Activated CD8-positive, alpha-beta T cell treated with anti-CD3 and anti-CD28 coated beads, Interleukin-2, amount 10 ng/mL, durations not matched to agents 7 days and 5 days (primary cell): ENCODE measurements at regions of chr5 and their contacts with region 1.

Region 1: GRCh38 chr5:131589510-131590348 is 45.3 kb downstream of the RAPGEF6 start:
- DNase-seq: peak; percentile 49
- ATAC-seq: peak; percentile 67
- H3K4me3 Mint-ChIP-seq: no peak overlapping the region
- H3K27ac Mint-ChIP-seq: no peak overlapping the region
- H3K4me1 Mint-ChIP-seq: peaks cover 33% of the 10 kb centered on the region
- H3K27me3 Mint-ChIP-seq: no peaks in the 10 kb centered on the region

Region 2: GRCh38 chr5:131198625-131199024 is 391.1 kb before region 1 on chr5:
- CTCF ChIA-PET with region 1: no interaction called
- POLR2A ChIA-PET with region 1: no interaction called
- DNase-seq: no peak
- ATAC-seq: no peak
- H3K4me3 Mint-ChIP-seq: no peak overlapping the region
- H3K27ac Mint-ChIP-seq: no peak overlapping the region
- H3K4me1 Mint-ChIP-seq: peaks cover 2% of the 10 kb centered on the region
- H3K27me3 Mint-ChIP-seq: no peaks in the 10 kb centered on the region

Region 3: GRCh38 chr5:131224387-131225201 is 365.1 kb before region 1 on chr5:
- CTCF ChIA-PET with region 1: no interaction called
- POLR2A ChIA-PET with region 1: no interaction called
- DNase-seq: peak; percentile 60
- ATAC-seq: peak; percentile 83
- H3K4me3 Mint-ChIP-seq: no peak overlapping the region
- H3K27ac Mint-ChIP-seq: no peak overlapping the region
- H3K4me1 Mint-ChIP-seq: peaks cover 14% of the 10 kb centered on the region
- H3K27me3 Mint-ChIP-seq: no peaks in the 10 kb centered on the region

Region 4: GRCh38 chr5:131514316-131515283 is 75.1 kb before region 1 on chr5:
- CTCF ChIA-PET with region 1: interaction called, 10 read pairs
- POLR2A ChIA-PET with region 1: no interaction called
- DNase-seq: peak; percentile 53
- ATAC-seq: peak; percentile 87
- H3K4me3 Mint-ChIP-seq: peak overlapping the region; percentile 82
- H3K27ac Mint-ChIP-seq: peak overlapping the region; percentile 84
- H3K4me1 Mint-ChIP-seq: peaks cover 40% of the 10 kb centered on the region
- H3K27me3 Mint-ChIP-seq: no peaks in the 10 kb centered on the region

Region 5: GRCh38 chr5:131563434-131564228 is 26.1 kb before region 1 on chr5:
- CTCF ChIA-PET with region 1: interaction called, 26 read pairs
- POLR2A ChIA-PET with region 1: no interaction called
- DNase-seq: no peak
- ATAC-seq: no peak
- H3K4me3 Mint-ChIP-seq: no peak overlapping the region
- H3K27ac Mint-ChIP-seq: no peak overlapping the region
- H3K4me1 Mint-ChIP-seq: peaks cover 7% of the 10 kb centered on the region
- H3K27me3 Mint-ChIP-seq: no peaks in the 10 kb centered on the region

Region 6: DNA sequence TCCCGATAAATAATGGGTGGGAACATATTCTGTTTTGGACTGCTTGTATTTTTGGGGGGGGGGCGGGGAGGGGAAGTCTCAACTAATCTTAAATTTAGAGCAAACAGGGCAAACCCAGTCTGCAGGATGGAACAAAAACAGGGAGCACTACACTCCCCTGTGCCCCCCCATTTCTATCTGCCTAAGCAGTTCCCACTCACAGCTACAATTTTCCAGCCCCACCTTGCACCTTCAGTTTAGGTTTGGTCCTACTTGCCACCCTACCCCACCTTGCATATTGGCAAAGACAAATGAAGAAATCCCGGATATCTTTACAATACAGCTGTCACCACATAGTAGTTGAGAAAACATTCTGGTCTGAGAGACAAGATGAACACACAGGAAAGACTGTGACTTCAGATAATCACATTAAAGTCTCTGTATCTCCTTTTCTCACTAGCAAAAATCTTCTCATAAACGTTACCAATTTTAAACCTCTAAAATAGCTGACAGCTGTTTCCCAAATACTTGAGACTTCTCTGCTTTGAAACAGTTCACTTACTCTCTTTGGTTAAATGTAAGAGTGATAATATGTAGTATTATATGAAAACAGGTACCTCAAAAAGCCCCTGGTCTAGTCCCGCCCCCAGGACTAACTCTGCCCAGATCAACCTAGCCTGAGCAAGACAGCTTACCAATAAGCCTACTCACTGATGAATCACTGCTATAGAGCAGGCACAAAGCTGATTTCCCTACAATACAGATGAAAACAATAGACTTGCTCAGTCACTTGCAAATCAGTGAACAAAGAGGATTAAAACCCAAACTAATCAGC is 50.5 kb after region 1 on chr5:
- CTCF ChIA-PET with region 1: interaction called, 14 read pairs
- POLR2A ChIA-PET with region 1: no interaction called
- DNase-seq: peak; percentile 26
- ATAC-seq: peak; percentile 37
- H3K4me3 Mint-ChIP-seq: no peak overlapping the region
- H3K27ac Mint-ChIP-seq: peak overlapping the region; percentile 31
- H3K4me1 Mint-ChIP-seq: peaks cover 29% of the 10 kb centered on the region
- H3K27me3 Mint-ChIP-seq: no peaks in the 10 kb centered on the region

Region 7: GRCh38 chr5:131810510-131811249 is 221.0 kb after region 1 on chr5:
- CTCF ChIA-PET with region 1: interaction called, 12 read pairs
- POLR2A ChIA-PET with region 1: no interaction called
- DNase-seq: peak; percentile 42
- ATAC-seq: no peak
- H3K4me3 Mint-ChIP-seq: no peak overlapping the region
- H3K27ac Mint-ChIP-seq: no peak overlapping the region
- H3K4me1 Mint-ChIP-seq: no peaks in the 10 kb centered on the region
- H3K27me3 Mint-ChIP-seq: peaks cover 8% of the 10 kb centered on the region